Activated CD4-positive, alpha-beta T cell treated with anti-CD3 and anti-CD28 coated beads for 36 hours (primary cell): ENCODE measurements at regions of chr18 and their contacts with region 1.

Region 1: GRCh38 chr18:21600526-21601410 is at the start of gene ESCO1:
- DNase-seq: peak; percentile 97
- ATAC-seq: peak; percentile 91
- H3K4me3 Mint-ChIP-seq: peak within 1 kb of the TSS; percentile 97
- H3K27ac Mint-ChIP-seq: peak within 1 kb of the TSS; percentile 94
- H3K4me1 Mint-ChIP-seq: peaks cover 41% of the 10 kb centered on the region
- H3K27me3 Mint-ChIP-seq: no peaks in the 10 kb centered on the region
- total RNA-seq, gene ESCO1: 21.7 to 26.5 TPM

Region 2: GRCh38 chr18:21489119-21489750 is 111.5 kb before region 1 on chr18:
- CTCF ChIA-PET with region 1: no interaction called
- POLR2A ChIA-PET with region 1: no interaction called
- intact Hi-C with region 1: loop called in 1 of 2 experiments (anchors 5 kb)
- DNase-seq: peak; percentile 61
- ATAC-seq: peak; percentile 55
- H3K4me3 Mint-ChIP-seq: no peak overlapping the region
- H3K27ac Mint-ChIP-seq: no peak overlapping the region
- H3K4me1 Mint-ChIP-seq: no peaks in the 10 kb centered on the region
- H3K27me3 Mint-ChIP-seq: peaks cover 5% of the 10 kb centered on the region

Region 3: DNA sequence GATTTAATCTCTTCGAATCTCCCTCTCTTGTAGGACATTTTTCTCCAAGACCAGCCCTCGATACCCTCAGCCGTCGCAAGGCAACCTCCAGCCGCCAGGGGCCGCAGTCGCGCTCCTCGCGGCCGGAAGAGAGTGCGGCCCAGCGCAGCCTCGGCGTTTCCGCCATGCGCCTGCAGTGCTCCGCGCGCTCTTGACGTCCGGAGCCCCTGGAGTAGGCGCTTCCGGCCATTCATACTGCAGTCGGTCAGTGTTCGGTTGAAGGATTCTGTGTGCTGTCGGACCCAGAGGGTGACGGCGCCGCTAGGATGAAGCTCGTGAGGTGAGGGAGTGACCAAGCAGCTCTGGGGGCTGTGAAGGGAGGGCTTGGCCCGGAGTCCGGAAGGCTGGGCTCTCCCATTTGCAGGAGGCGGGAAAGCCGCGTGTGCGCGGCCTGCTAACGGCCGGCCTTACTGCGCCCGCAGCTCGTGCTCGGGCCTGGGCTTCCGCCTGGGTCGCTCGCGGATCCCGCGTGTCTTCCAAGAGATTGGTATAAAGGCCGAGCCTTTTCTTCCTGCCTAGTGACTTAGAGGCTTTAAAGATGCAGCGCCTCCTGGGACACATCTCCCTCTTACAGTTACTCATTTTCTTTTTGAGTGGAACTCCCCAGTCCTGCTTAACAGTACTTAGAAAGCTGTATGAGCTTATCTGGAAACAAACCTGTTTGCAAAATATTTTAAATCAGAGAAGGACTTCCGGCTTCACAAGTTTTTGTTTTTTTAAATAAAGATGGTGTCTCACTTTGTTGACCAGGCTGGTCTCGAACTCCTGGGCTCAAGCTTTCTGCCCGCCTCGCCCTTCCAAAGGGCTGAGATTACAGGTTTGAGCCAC is 11.6 kb after region 1 on chr18 and contains the start of gene SNRPD1:
- CTCF ChIA-PET with region 1: interaction called, 93 read pairs
- POLR2A ChIA-PET with region 1: interaction called, 41 read pairs
- intact Hi-C with region 1: loop called (anchors 1 kb)
- DNase-seq: peak; percentile 93
- ATAC-seq: peak; percentile 98
- H3K4me3 Mint-ChIP-seq: peak within 1 kb of the TSS; percentile 92
- H3K27ac Mint-ChIP-seq: peak within 1 kb of the TSS; percentile 99
- H3K4me1 Mint-ChIP-seq: peaks cover 34% of the 10 kb centered on the region
- H3K27me3 Mint-ChIP-seq: no peaks in the 10 kb centered on the region
- total RNA-seq, gene SNRPD1: 79.9 to 163 TPM

Region 4: DNA sequence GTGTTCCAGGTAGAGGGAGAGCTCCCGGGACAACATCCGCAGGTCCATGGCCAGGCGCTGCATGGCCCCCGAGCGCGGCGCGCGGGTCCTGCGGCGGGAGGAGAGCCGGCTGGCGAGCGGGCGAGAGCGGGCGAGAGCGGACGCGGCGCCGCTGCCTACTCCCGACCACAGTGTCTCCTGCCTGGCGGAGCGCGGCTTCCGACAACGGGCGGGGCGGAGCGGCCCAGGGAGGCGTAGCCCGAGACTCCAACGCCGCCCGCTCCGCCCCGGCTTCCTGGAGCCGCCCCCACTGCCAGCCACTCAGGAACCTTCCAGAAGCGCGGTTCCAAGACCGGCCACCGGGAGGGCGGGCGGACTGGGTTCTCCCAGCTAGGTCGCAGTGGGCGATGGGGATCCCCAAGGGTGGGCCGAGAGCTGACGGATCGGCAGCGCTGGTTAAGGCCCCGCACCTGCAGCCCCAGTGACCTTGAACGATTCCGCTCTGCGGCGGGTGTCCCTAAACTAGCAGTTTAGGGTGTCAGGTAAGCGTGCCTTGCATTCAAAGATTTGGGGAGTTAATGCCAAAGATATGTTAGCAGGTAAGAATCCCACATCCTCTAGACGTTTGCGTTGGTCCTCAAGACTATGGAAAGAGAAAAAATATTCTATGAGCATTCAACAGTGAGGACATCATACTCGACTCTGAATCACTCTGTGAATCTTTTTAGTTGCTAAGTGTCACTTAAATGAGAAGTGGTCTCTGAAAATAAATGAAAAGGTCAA is 104.0 kb after region 1 on chr18 and contains the start of gene ABHD3:
- CTCF ChIA-PET with region 1: interaction called, 6 read pairs
- POLR2A ChIA-PET with region 1: interaction called, 6 read pairs
- intact Hi-C with region 1: loop called in 1 of 2 experiments (anchors 1 kb)
- DNase-seq: peak; percentile 93
- ATAC-seq: peak; percentile 95
- H3K4me3 Mint-ChIP-seq: peak within 1 kb of the TSS; percentile 87
- H3K27ac Mint-ChIP-seq: peak within 1 kb of the TSS; percentile 93
- H3K4me1 Mint-ChIP-seq: peaks cover 24% of the 10 kb centered on the region
- H3K27me3 Mint-ChIP-seq: no peaks in the 10 kb centered on the region
- total RNA-seq, gene ABHD3: 13.7 to 14.3 TPM

Region 5: DNA sequence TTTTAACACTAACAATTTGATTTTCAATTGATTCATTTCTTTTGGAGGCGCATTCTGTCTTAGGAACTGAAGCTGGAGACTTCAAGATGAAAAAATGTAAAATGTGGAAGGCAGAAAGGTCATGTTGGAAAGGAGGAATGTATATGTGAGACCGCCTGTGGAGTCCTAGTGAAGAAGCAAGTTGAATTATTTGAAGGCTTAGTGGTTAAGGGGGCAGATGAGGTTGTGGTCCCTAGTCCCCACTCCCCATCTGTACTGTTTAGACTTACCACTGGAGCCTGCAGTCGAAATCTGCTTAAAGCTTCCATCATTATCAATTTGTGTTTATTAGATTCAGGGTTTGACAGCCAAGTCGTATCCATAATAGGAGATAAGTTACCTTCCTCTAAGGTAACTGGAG is 124.4 kb after region 1 on chr18:
- CTCF ChIA-PET with region 1: no interaction called
- POLR2A ChIA-PET with region 1: no interaction called
- intact Hi-C with region 1: no loop called
- DNase-seq: no peak
- ATAC-seq: no peak
- H3K4me3 Mint-ChIP-seq: no peak overlapping the region
- H3K27ac Mint-ChIP-seq: no peak overlapping the region
- H3K4me1 Mint-ChIP-seq: no peaks in the 10 kb centered on the region
- H3K27me3 Mint-ChIP-seq: no peaks in the 10 kb centered on the region

Region 6: GRCh38 chr18:23586249-23587196 is 1985.8 kb after region 1 on chr18 and contains the start of gene NPC1:
- CTCF ChIA-PET with region 1: no interaction called
- POLR2A ChIA-PET with region 1: no interaction called
- intact Hi-C with region 1: loop called in 1 of 2 experiments (anchors 10 kb)
- DNase-seq: peak; percentile 95
- ATAC-seq: peak; percentile 95
- H3K4me3 Mint-ChIP-seq: peak within 1 kb of the TSS; percentile 94
- H3K27ac Mint-ChIP-seq: peak within 1 kb of the TSS; percentile 91
- H3K4me1 Mint-ChIP-seq: peaks cover 39% of the 10 kb centered on the region
- H3K27me3 Mint-ChIP-seq: no peaks in the 10 kb centered on the region
- total RNA-seq, gene NPC1: 21.6 to 29.2 TPM